ENCODE measurements at regions of chr10 and their contacts with region 1.

Region 1: GRCh38 chr10:51445588-51445987 is 253.8 kb downstream of the CSTF2T start:
- DNase-seq: no peak
- ATAC-seq: peak in 1 of 2 donors; percentile 68

Region 2: DNA sequence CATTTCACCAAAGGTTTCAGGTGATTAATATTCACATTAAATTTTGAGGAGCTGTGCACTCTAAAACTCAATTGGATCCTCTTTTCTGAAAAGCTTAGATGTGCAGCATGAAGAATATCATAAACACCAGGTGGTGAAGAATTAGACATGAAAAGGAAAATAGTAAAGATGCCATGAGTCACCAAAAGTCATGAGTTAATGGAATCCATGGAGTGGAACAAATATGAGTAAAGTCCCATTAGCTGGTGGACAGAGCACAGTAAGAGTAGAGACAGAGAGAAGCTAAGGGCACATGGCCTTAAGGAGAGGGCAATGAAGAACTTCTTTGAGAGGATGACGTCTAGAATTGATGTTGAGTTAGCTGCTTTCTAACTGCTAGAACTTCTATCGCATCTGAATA is 17.8 kb before region 1 on chr10:
- intact Hi-C with region 1: loop called in 1 of 2 experiments (anchors 2 kb)
- DNase-seq: no peak
- ATAC-seq: no peak

Region 3: GRCh38 chr10:52499281-52499680 is 1053.7 kb after region 1 on chr10:
- intact Hi-C with region 1: no loop called
- DNase-seq: no peak
- ATAC-seq: no peak

Measured in left cardiac atrium (tissue), 4 donors.